ENCODE measurements at regions of chr10 and their contacts with region 1.

Region 1: DNA sequence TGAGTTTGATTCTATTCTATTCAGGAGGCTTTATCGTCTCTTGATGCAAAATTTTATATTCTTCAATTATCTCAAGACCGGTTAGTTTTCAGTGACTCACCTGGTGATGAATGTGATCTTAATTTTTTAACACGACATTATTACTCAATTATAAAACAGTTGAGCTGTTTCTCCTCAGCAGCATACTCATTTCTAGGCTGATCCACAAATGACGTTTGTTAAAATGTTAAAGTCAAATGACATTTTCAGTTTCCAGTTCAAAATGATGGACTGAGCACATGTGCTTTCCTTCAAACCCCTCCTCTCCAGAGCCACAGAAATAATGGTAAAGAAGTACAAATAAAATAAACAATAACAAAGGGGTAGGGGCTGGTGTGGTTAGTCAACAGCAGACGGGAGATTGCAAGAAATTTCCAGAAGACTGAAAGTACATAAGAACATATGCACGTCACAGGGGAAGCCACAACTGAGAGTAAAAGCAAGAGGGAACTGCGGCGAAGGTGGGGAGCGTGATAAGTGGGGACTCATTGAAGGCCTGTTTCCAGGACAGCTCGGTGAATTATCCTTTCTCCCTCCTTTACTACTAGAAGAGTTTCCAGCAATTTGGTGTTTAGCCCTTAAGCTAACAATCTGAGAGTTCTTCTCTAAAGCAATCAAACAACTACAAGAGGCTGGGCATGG is 10.9 kb downstream of the MACROH2A2 start:
- DNase-seq: peak; percentile 47
- H3K4me3 Mint-ChIP-seq: no peak overlapping the region
- H3K27ac Mint-ChIP-seq: no peak overlapping the region
- H3K4me1 Mint-ChIP-seq: peaks cover 3% of the 10 kb centered on the region
- H3K27me3 Mint-ChIP-seq: no peaks in the 10 kb centered on the region

Region 2: GRCh38 chr10:69929575-69929974 is 134.0 kb before region 1 on chr10:
- CTCF ChIA-PET with region 1: no interaction called
- POLR2A ChIA-PET with region 1: no interaction called
- intact Hi-C with region 1: no loop called
- DNase-seq: no peak
- H3K4me3 Mint-ChIP-seq: no peak overlapping the region
- H3K27ac Mint-ChIP-seq: no peak overlapping the region
- H3K4me1 Mint-ChIP-seq: no peaks in the 10 kb centered on the region
- H3K27me3 Mint-ChIP-seq: peaks cover 12% of the 10 kb centered on the region

Region 3: GRCh38 chr10:70052462-70053217 is 10.9 kb before region 1 on chr10 and contains the start of gene MACROH2A2:
- CTCF ChIA-PET with region 1: no interaction called
- POLR2A ChIA-PET with region 1: no interaction called
- intact Hi-C with region 1: loop called (anchors 1 kb)
- DNase-seq: peak; percentile 47
- H3K4me3 Mint-ChIP-seq: peak within 1 kb of the TSS; percentile 78
- H3K27ac Mint-ChIP-seq: no peak within 1 kb of the TSS
- H3K4me1 Mint-ChIP-seq: peaks cover 7% of the 10 kb centered on the region
- H3K27me3 Mint-ChIP-seq: peaks cover 31% of the 10 kb centered on the region
- total RNA-seq, gene MACROH2A2: 4.1 to 4.8 TPM